A673 (cell line): ENCODE measurements at regions of chr11 and their contacts with region 1.

Region 1: GRCh38 chr11:45252134-45252855 is 33.8 kb downstream of the SYT13 start:
- DNase-seq: peak; percentile 67
- H3K4me3 ChIP-seq: no peak overlapping the region
- H3K27ac ChIP-seq: no peak overlapping the region
- H3K4me1 ChIP-seq: no peaks in the 10 kb centered on the region
- H3K27me3 ChIP-seq: peaks cover 3% of the 10 kb centered on the region
- CTCF ChIP-seq: peak; percentile 96

Region 2: GRCh38 chr11:45174168-45174835 is 78.0 kb before region 1 on chr11:
- CTCF ChIA-PET with region 1: no interaction called
- POLR2A ChIA-PET with region 1: interaction called, 14 read pairs
- intact Hi-C with region 1: no loop called
- DNase-seq: no peak
- H3K4me3 ChIP-seq: no peak overlapping the region
- H3K27ac ChIP-seq: no peak overlapping the region
- H3K4me1 ChIP-seq: peaks cover 11% of the 10 kb centered on the region
- H3K27me3 ChIP-seq: no peaks in the 10 kb centered on the region
- CTCF ChIP-seq: no peak

Region 3: GRCh38 chr11:45332276-45332934 is 80.1 kb after region 1 on chr11:
- CTCF ChIA-PET with region 1: interaction called, 3 read pairs
- POLR2A ChIA-PET with region 1: no interaction called
- intact Hi-C with region 1: loop called (anchors 5 kb)
- DNase-seq: peak; percentile 80
- H3K4me3 ChIP-seq: no peak overlapping the region
- H3K27ac ChIP-seq: no peak overlapping the region
- H3K4me1 ChIP-seq: peaks cover 11% of the 10 kb centered on the region
- H3K27me3 ChIP-seq: no peaks in the 10 kb centered on the region
- CTCF ChIP-seq: peak; percentile 91

Region 4: DNA sequence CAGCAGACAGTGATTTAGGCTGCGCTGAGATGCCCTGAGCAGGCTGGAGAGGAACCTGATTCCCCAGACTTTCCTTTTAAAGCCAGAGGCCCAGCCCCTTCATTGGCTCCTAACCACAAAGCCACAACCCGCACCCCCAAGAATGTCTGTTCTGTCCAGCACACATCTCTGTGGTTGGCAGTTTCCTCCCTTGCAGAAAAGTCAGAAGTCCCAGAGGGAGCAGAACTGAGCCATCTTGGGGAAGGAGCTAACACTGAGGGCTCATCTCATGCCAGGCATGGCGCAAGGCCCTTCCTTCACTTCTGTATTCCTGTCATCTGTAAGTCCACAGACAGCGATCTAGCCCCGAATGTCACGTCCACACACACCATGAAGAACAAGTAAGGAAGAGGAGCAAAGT is 130.9 kb after region 1 on chr11:
- CTCF ChIA-PET with region 1: no interaction called
- POLR2A ChIA-PET with region 1: no interaction called
- intact Hi-C with region 1: no loop called
- DNase-seq: no peak
- H3K4me3 ChIP-seq: no peak overlapping the region
- H3K27ac ChIP-seq: no peak overlapping the region
- H3K4me1 ChIP-seq: no peaks in the 10 kb centered on the region
- H3K27me3 ChIP-seq: no peaks in the 10 kb centered on the region
- CTCF ChIP-seq: no peak